Endothelial cell of umbilical vein (primary cell): ENCODE measurements at regions of chr4 and their contacts with region 1.

Region 1: GRCh38 chr4:156771171-156771837 is 200.3 kb downstream of the PDGFC start:
- DNase-seq: peak; percentile 88
- H3K4me3 ChIP-seq: peak overlapping the region in 1 of 3 experiments; percentile 13
- H3K27ac ChIP-seq: peak overlapping the region; percentile 77
- H3K4me1 ChIP-seq: peaks cover 14% of the 10 kb centered on the region
- H3K27me3 ChIP-seq: no peaks in the 10 kb centered on the region
- CTCF ChIP-seq: no peak
- POLR2A ChIP-seq: peak; percentile 36

Region 2: DNA sequence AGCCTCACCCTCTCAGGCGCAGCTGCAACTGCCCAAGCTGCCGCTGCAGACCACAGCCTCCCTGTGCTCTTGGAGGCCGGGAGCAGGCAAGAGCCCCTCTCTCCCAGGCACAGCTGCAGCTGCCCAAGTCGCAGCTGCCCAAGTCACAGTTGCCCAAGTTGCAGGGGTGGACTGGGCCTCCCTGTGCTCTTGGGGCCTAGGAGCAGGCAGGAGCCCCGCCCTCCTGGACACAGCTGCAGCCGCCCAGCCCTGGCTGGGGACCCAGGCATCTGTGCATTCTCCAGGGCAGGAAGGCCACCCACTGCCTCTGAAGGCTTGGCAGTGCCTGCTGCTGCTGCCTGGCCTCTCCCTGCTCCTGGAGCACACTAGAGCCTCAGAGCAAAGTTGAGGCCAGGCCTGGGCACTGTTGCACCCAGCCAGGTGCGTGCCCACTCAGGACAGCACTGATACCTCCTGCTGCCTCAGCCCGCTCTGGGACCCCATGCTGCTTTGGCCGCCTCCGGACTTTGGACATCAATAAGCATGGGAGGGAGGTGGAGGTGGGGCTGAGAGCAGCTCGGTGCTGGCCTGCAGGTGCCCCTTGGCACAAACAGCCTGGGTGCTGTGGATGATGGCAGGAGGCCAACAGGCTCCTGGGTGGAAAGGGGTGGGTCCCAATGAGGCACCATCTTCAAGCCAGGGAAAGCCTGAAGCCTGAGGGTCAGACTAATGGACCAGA is 47.2 kb before region 1 on chr4:
- CTCF ChIA-PET with region 1: no interaction called
- POLR2A ChIA-PET with region 1: no interaction called
- dilution Hi-C with region 1: no loop called
- intact Hi-C with region 1: no loop called
- DNase-seq: no peak
- H3K4me3 ChIP-seq: no peak overlapping the region
- H3K27ac ChIP-seq: no peak overlapping the region
- H3K4me1 ChIP-seq: no peaks in the 10 kb centered on the region
- H3K27me3 ChIP-seq: no peaks in the 10 kb centered on the region
- CTCF ChIP-seq: no peak
- POLR2A ChIP-seq: no peak

Region 3: GRCh38 chr4:156790866-156791265 is 19.6 kb after region 1 on chr4:
- CTCF ChIA-PET with region 1: interaction called, 15 read pairs
- POLR2A ChIA-PET with region 1: no interaction called
- dilution Hi-C with region 1: no loop called
- intact Hi-C with region 1: no loop called
- DNase-seq: peak; percentile 24
- H3K4me3 ChIP-seq: no peak overlapping the region
- H3K27ac ChIP-seq: no peak overlapping the region
- H3K4me1 ChIP-seq: no peaks in the 10 kb centered on the region
- H3K27me3 ChIP-seq: no peaks in the 10 kb centered on the region
- CTCF ChIP-seq: no peak
- POLR2A ChIP-seq: no peak

Region 4: GRCh38 chr4:156858071-156858470 is 86.8 kb after region 1 on chr4:
- CTCF ChIA-PET with region 1: no interaction called
- POLR2A ChIA-PET with region 1: no interaction called
- dilution Hi-C with region 1: no loop called
- intact Hi-C with region 1: no loop called
- DNase-seq: no peak
- H3K4me3 ChIP-seq: no peak overlapping the region
- H3K27ac ChIP-seq: no peak overlapping the region
- H3K4me1 ChIP-seq: no peaks in the 10 kb centered on the region
- H3K27me3 ChIP-seq: no peaks in the 10 kb centered on the region
- CTCF ChIP-seq: no peak
- POLR2A ChIP-seq: no peak